ENCODE measurements at regions of chr5 and their contacts with region 1.

Region 1: DNA sequence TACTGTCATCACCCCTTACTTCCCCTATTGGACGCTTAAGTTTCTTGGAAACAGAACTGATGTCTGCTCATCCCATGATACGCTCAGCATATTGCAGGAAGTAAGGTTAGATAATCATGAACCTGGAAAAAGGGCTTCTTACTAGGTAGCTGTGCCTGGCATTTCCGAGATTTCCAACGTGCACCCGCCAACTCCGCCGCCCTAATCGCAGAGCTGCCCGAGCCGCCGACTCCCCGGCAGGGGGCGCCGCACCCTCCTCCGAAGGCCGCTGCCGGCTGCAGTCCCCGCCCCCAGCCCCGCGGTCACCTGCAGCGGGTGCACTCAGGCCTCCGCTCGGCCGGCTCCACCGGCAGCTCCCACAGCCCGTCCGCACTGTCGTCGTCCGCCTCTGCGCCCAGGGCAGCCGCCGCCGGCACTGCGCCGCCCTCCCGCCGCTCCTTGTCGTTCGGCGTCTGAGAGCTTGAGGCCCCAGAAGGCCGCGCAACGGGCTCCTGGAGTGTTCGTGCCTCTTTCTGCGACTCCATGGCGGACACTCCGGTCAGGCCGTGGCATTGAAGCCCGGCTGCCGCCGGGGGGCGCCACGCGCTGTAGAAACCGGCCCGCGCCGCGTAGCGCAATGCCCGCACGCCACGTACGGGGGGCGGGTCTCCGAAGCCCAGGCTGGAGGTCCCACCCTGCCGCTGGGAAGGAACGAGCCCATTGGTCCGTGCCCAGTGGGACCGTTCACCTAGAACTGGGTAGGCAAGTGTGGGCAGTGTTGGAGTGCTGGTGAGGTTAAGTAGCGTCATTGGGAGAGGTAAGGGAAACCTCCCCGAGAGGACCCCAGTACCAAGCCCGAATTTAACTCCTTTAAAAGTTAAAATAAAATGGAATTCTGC is at the start of gene DTWD2:
- DNase-seq: peak; percentile 86 to 96 (median 89)
- ATAC-seq: peak; percentile 91
- H3K4me3 ChIP-seq: peak within 1 kb of the TSS; percentile 57 to 77
- H3K4me3 Mint-ChIP-seq: peak within 1 kb of the TSS; percentile 86
- H3K27ac ChIP-seq: peak within 1 kb of the TSS; percentile 55 to 66
- H3K27ac Mint-ChIP-seq: peak within 1 kb of the TSS; percentile 85
- H3K4me1 ChIP-seq: peaks cover 11% of the 10 kb centered on the region
- H3K4me1 Mint-ChIP-seq: peaks cover 16% of the 10 kb centered on the region
- H3K27me3 ChIP-seq: no peaks in the 10 kb centered on the region
- H3K27me3 Mint-ChIP-seq: no peaks in the 10 kb centered on the region
- CTCF ChIP-seq: peak; percentile 99
- total RNA-seq, gene DTWD2: 1.6 to 1.9 TPM

Region 2: DNA sequence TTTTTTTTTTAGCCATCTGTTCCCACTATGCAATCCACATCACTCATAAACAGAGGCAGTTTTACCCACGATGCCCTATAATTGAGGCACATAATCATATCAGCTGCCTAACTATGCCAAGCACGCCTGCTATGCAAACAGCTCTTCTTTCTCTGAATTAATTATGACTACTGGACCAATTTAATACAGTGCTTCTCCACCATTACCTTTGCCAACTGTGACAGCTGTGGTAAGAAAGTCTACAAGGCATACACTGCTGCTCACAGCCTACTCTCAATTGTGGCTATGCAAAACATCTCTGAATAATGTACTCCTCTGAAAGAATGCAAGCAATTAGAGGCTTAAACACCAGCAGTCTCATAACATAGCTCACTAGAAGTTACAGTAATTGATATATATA is 97.0 kb before region 1 on chr5:
- CTCF ChIA-PET with region 1: no interaction called
- POLR2A ChIA-PET with region 1: no interaction called
- intact Hi-C with region 1: no loop called
- DNase-seq: no peak
- ATAC-seq: no peak
- H3K4me3 ChIP-seq: no peak overlapping the region
- H3K4me3 Mint-ChIP-seq: no peak overlapping the region
- H3K27ac ChIP-seq: no peak overlapping the region
- H3K27ac Mint-ChIP-seq: no peak overlapping the region
- H3K4me1 ChIP-seq: no peaks in the 10 kb centered on the region
- H3K4me1 Mint-ChIP-seq: no peaks in the 10 kb centered on the region
- H3K27me3 ChIP-seq: no peaks in the 10 kb centered on the region
- H3K27me3 Mint-ChIP-seq: no peaks in the 10 kb centered on the region
- CTCF ChIP-seq: no peak

Region 3: GRCh38 chr5:118946138-118946800 is 42.0 kb before region 1 on chr5:
- CTCF ChIA-PET with region 1: no interaction called
- POLR2A ChIA-PET with region 1: no interaction called
- intact Hi-C with region 1: no loop called
- DNase-seq: no peak
- ATAC-seq: no peak
- H3K4me3 ChIP-seq: no peak overlapping the region
- H3K4me3 Mint-ChIP-seq: no peak overlapping the region
- H3K27ac ChIP-seq: no peak overlapping the region
- H3K27ac Mint-ChIP-seq: no peak overlapping the region
- H3K4me1 ChIP-seq: no peaks in the 10 kb centered on the region
- H3K4me1 Mint-ChIP-seq: no peaks in the 10 kb centered on the region
- H3K27me3 ChIP-seq: no peaks in the 10 kb centered on the region
- H3K27me3 Mint-ChIP-seq: no peaks in the 10 kb centered on the region
- CTCF ChIP-seq: no peak

Region 4: GRCh38 chr5:119309326-119309725 is 321.1 kb after region 1 on chr5:
- CTCF ChIA-PET with region 1: interaction called, 12 read pairs
- POLR2A ChIA-PET with region 1: interaction called, 3 read pairs
- intact Hi-C with region 1: loop called in 1 of 2 experiments (anchors 1 kb)
- DNase-seq: peak in 1 of 9 experiments; percentile 57
- ATAC-seq: peak; percentile 25
- H3K4me3 ChIP-seq: no peak overlapping the region
- H3K4me3 Mint-ChIP-seq: peak overlapping the region; percentile 78
- H3K27ac ChIP-seq: peak overlapping the region; percentile 30 to 67
- H3K27ac Mint-ChIP-seq: peak overlapping the region; percentile 99
- H3K4me1 ChIP-seq: peaks cover 97% of the 10 kb centered on the region
- H3K4me1 Mint-ChIP-seq: peaks cover 96% of the 10 kb centered on the region
- H3K27me3 ChIP-seq: no peaks in the 10 kb centered on the region
- H3K27me3 Mint-ChIP-seq: no peaks in the 10 kb centered on the region
- CTCF ChIP-seq: no peak

Region 5: GRCh38 chr5:119435436-119436132 is 447.4 kb after region 1 on chr5:
- CTCF ChIA-PET with region 1: interaction called, 48 read pairs
- POLR2A ChIA-PET with region 1: no interaction called
- intact Hi-C with region 1: loop called (anchors 1 kb)
- DNase-seq: peak; percentile 50 to 83 (median 74)
- ATAC-seq: peak; percentile 84
- H3K4me3 ChIP-seq: no peak overlapping the region
- H3K4me3 Mint-ChIP-seq: no peak overlapping the region
- H3K27ac ChIP-seq: no peak overlapping the region
- H3K27ac Mint-ChIP-seq: no peak overlapping the region
- H3K4me1 ChIP-seq: peaks cover 3% of the 10 kb centered on the region
- H3K4me1 Mint-ChIP-seq: peaks cover 8% of the 10 kb centered on the region
- H3K27me3 ChIP-seq: no peaks in the 10 kb centered on the region
- H3K27me3 Mint-ChIP-seq: peaks cover 13% of the 10 kb centered on the region
- CTCF ChIP-seq: peak; percentile 64

Region 6: GRCh38 chr5:119743927-119744326 is 755.7 kb after region 1 on chr5:
- CTCF ChIA-PET with region 1: interaction called, 4 read pairs
- POLR2A ChIA-PET with region 1: no interaction called
- intact Hi-C with region 1: loop called (anchors 2 to 5 kb)
- DNase-seq: peak in 2 of 9 experiments; percentile 39 to 50
- ATAC-seq: no peak
- H3K4me3 ChIP-seq: no peak overlapping the region
- H3K4me3 Mint-ChIP-seq: no peak overlapping the region
- H3K27ac ChIP-seq: no peak overlapping the region
- H3K27ac Mint-ChIP-seq: no peak overlapping the region
- H3K4me1 ChIP-seq: no peaks in the 10 kb centered on the region
- H3K4me1 Mint-ChIP-seq: no peaks in the 10 kb centered on the region
- H3K27me3 ChIP-seq: no peaks in the 10 kb centered on the region
- H3K27me3 Mint-ChIP-seq: no peaks in the 10 kb centered on the region
- CTCF ChIP-seq: peak; percentile 31

Region 7: DNA sequence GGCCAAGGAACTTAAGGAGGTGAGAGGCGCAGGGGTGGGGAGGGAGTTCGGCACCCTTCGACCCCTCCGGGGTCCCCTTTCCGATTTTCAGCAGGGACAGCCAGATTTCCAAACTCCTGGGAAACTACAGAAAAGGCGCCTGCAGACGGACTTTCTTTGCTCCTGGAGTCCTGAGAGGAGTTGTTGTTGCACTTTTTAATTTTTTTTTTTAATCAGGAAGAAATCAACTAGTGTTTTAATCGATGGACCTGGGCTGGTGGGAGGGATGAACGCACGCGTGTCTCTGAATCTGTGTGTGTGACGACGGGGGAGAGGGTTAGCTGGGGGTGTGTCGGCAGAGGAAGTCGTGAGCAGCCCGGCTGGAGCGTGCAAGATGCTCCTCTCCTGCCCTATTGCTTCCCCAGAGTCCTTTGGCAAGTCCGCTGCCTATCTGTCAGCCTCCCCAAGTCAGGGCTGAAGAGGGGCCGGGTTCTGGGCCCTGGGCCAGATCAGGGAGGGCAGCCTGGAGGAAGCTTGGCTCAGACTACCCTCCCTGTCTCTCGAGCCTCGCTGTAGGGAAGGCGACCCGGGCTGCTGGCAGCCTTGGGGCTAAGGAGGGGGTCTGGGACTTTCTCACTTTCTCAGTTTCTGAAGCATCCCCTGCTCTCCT is 1476.5 kb after region 1 on chr5:
- CTCF ChIA-PET with region 1: no interaction called
- POLR2A ChIA-PET with region 1: no interaction called
- intact Hi-C with region 1: loop called in 1 of 2 experiments (anchors 5 kb)
- DNase-seq: no peak
- ATAC-seq: no peak
- H3K4me3 ChIP-seq: no peak overlapping the region
- H3K4me3 Mint-ChIP-seq: peak overlapping the region; percentile 57
- H3K27ac ChIP-seq: no peak overlapping the region
- H3K27ac Mint-ChIP-seq: no peak overlapping the region
- H3K4me1 ChIP-seq: no peaks in the 10 kb centered on the region
- H3K4me1 Mint-ChIP-seq: peaks cover 9% of the 10 kb centered on the region
- H3K27me3 ChIP-seq: peaks cover 0 to 11% of the 10 kb centered on the region in 2 experiments
- H3K27me3 Mint-ChIP-seq: peaks cover 37% of the 10 kb centered on the region
- CTCF ChIP-seq: no peak